ENCODE measurements at regions of chr9 and their contacts with region 1.

Region 1: DNA sequence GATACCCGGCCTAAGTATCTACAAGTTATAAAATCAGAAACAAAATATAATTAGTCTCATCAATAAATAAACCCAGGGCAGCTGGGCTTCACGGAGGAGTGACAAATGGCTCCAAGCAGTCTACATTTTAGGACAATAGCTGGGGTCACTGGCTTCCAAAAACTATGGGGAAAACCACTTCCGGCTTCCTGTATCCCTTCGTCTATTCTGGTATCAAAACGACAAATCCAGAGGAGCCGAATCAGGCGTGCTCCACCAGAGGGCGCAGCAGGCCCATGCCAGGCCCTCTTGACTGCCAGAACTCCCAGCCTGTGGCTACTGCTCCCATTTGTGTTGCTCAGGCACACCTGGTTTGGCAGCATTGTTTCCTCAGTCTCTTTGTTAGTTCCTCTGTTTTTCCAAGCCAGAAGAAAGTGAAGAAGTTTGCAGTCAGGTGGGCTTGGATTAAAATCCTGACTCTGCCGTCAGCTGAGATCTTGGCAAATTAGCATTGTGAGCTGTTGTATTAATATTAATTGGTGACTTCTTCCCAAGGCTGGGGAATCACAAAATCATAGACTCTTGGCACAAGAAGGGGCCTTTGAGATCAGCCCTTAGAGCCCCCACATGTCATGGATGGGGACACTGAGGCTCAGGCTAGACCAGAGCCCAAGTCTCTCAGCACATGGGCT is 11.6 kb upstream of the RAB14 start:
- DNase-seq: peak; percentile 77
- ATAC-seq: peak; percentile 70
- H3K4me3 Mint-ChIP-seq: no peak overlapping the region
- H3K27ac Mint-ChIP-seq: no peak overlapping the region
- H3K4me1 Mint-ChIP-seq: peaks cover 22% of the 10 kb centered on the region
- H3K27me3 Mint-ChIP-seq: no peaks in the 10 kb centered on the region

Region 2: GRCh38 chr9:120868676-120869359 is 344.5 kb before region 1 on chr9:
- CTCF ChIA-PET with region 1: no interaction called
- POLR2A ChIA-PET with region 1: no interaction called
- DNase-seq: peak; percentile 98
- ATAC-seq: peak; percentile 97
- H3K4me3 Mint-ChIP-seq: peak overlapping the region; percentile 82
- H3K27ac Mint-ChIP-seq: peak overlapping the region; percentile 99
- H3K4me1 Mint-ChIP-seq: peaks cover 50% of the 10 kb centered on the region
- H3K27me3 Mint-ChIP-seq: no peaks in the 10 kb centered on the region

Region 3: GRCh38 chr9:121023064-121023463 is 190.2 kb before region 1 on chr9:
- CTCF ChIA-PET with region 1: no interaction called
- POLR2A ChIA-PET with region 1: no interaction called
- DNase-seq: no peak
- ATAC-seq: no peak
- H3K4me3 Mint-ChIP-seq: no peak overlapping the region
- H3K27ac Mint-ChIP-seq: no peak overlapping the region
- H3K4me1 Mint-ChIP-seq: no peaks in the 10 kb centered on the region
- H3K27me3 Mint-ChIP-seq: peaks cover 4% of the 10 kb centered on the region

Region 4: DNA sequence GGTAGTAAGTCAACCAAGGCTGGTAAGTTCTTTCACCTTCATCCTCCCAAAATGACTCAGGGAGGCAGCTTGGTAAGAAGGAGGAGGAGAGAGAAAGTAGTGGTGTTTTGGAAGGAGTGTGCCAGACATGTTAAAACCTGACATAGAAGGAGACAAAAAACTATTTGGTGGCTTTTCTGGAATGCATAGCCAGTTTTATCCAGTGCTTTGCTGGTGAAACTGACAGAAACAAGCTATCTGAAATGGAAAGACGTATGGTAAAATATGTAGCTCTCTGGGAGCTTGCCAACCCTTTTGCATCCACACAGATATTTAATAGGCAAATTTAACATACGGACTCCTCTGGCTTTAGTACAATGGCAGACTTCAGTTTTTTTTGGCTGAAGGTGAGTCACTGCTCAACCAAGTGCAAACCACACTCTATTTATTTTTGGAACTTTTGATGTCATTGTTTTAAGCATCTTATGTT is 57.0 kb before region 1 on chr9:
- CTCF ChIA-PET with region 1: no interaction called
- POLR2A ChIA-PET with region 1: no interaction called
- DNase-seq: peak; percentile 35
- ATAC-seq: peak; percentile 84
- H3K4me3 Mint-ChIP-seq: no peak overlapping the region
- H3K27ac Mint-ChIP-seq: peak overlapping the region; percentile 87
- H3K4me1 Mint-ChIP-seq: peaks cover 46% of the 10 kb centered on the region
- H3K27me3 Mint-ChIP-seq: no peaks in the 10 kb centered on the region

Region 5: DNA sequence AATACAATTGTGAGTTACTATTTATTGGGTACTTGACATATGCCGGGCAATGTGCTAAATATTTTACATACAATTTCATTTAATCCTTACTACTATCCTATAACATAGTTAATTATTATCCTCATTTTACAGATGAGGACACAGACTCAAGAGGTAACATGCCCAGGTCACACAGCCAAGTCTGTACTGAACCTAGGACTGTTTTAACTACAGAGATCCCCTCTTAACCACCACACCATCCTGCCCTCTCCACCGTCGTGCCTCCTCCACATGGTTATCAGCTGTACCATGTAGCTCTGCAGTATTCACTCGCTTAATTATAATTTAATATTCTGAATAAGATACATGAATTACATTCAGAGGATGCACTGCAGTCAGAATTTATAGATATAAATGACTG is 16.9 kb before region 1 on chr9:
- CTCF ChIA-PET with region 1: interaction called, 19 read pairs
- POLR2A ChIA-PET with region 1: interaction called, 8 read pairs
- DNase-seq: no peak
- ATAC-seq: no peak
- H3K4me3 Mint-ChIP-seq: no peak overlapping the region
- H3K27ac Mint-ChIP-seq: no peak overlapping the region
- H3K4me1 Mint-ChIP-seq: peaks cover 71% of the 10 kb centered on the region
- H3K27me3 Mint-ChIP-seq: no peaks in the 10 kb centered on the region

Region 6: GRCh38 chr9:121233906-121234901 is 20.9 kb after region 1 on chr9:
- CTCF ChIA-PET with region 1: interaction called, 18 read pairs
- POLR2A ChIA-PET with region 1: no interaction called
- DNase-seq: no peak
- ATAC-seq: no peak
- H3K4me3 Mint-ChIP-seq: no peak overlapping the region
- H3K27ac Mint-ChIP-seq: no peak overlapping the region
- H3K4me1 Mint-ChIP-seq: no peaks in the 10 kb centered on the region
- H3K27me3 Mint-ChIP-seq: no peaks in the 10 kb centered on the region

Region 7: GRCh38 chr9:121278535-121279261 is 65.4 kb after region 1 on chr9:
- CTCF ChIA-PET with region 1: interaction called, 27 read pairs
- POLR2A ChIA-PET with region 1: no interaction called
- DNase-seq: peak; percentile 66
- ATAC-seq: peak; percentile 85
- H3K4me3 Mint-ChIP-seq: no peak overlapping the region
- H3K27ac Mint-ChIP-seq: no peak overlapping the region
- H3K4me1 Mint-ChIP-seq: peaks cover 5% of the 10 kb centered on the region
- H3K27me3 Mint-ChIP-seq: no peaks in the 10 kb centered on the region

Region 8: DNA sequence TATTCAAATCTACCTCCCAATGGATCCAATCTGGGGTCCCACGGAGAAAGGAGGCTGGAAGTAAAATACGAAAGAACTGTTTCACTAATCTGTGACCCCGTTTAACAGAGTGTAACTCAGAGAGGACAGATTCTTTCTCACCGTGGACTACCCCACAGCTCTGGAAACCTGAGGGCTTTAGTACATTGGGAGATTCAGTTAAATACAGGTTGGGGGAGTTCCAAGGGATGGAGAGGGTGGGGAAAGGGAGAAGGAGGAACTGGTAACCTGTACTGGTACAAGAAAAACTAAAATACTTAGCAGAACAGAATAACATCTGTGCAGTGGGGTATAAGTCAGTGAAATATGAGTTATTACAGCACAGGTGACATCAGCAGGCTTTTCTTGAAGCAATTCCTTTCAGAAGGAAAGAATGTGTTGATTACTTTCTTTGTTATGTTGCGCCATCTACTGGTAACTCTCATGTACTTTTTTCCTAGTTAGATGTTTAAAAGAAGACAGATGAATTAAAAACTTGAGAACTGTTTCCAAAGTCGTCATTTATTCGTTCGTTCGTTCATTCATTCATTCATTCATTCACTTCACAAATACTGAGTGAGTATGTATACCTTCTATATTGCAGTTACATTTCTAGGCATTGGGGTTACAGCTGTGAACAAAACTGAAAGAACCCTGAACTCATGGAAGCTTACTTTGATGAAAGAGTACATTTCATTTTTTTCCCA is 186.8 kb after region 1 on chr9:
- CTCF ChIA-PET with region 1: interaction called, 51 read pairs
- POLR2A ChIA-PET with region 1: no interaction called
- DNase-seq: no peak
- ATAC-seq: peak; percentile 57
- H3K4me3 Mint-ChIP-seq: no peak overlapping the region
- H3K27ac Mint-ChIP-seq: no peak overlapping the region
- H3K4me1 Mint-ChIP-seq: peaks cover 7% of the 10 kb centered on the region
- H3K27me3 Mint-ChIP-seq: peaks cover 19% of the 10 kb centered on the region

Measured in activated CD8-positive, alpha-beta T cell treated with anti-CD3 and anti-CD28 coated beads, Interleukin-2, amount 10 ng/mL, durations not matched to agents 7 days and 5 days (primary cell).